ENCODE measurements at regions of chr20 and their contacts with region 1.

Region 1: DNA sequence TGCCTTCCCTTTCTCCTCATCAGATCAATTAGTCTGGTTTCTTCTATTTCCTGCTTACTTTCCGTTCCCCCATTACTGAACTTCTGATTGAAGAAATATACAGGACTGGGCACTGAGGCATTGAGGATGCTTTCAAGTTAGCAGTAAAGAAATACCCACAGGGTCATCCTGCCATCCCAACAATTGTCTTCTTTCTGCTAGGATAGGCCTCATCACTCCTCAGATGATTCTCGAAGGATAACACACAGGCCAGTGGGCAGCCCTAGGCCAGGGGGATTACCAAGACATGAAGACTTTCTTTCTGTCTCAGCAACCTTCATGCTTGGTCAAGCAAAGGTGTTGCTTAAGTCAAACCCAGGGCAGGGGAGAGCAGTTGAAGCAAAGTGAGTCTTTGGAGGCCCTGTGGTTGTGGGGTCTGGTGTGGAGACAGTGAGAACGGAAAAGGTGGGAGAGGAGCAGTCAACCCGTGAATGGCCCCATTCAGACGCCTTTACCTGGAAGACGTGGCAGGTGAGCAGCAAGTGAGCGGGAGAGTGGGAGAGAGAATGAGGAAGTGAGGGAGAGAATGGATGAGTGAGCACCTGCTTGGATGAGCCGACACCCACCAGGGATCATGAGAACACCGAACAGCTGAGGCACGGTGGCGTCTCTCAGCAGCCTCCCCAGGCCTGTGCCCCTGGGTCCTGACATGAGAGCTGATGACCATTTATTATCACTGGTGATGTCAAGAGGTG is 462.9 kb downstream of the PREX1 start:
- DNase-seq: no peak
- H3K4me3 ChIP-seq: no peak overlapping the region
- H3K27ac ChIP-seq: no peak overlapping the region
- H3K4me1 ChIP-seq: peaks cover 0 to 24% (median 23%) of the 10 kb centered on the region in 4 donors
- H3K27me3 ChIP-seq: no peaks in the 10 kb centered on the region
- CTCF ChIP-seq: no peak
- EP300 ChIP-seq: no peak
- POLR2A ChIP-seq: no peak

Region 2: GRCh38 chr20:48342822-48343484 is 21.9 kb before region 1 on chr20:
- intact Hi-C with region 1: loop called (anchors 2 kb)
- DNase-seq: no peak
- H3K4me3 ChIP-seq: no peak overlapping the region
- H3K27ac ChIP-seq: no peak overlapping the region
- H3K4me1 ChIP-seq: peaks cover 0 to 28% (median 17%) of the 10 kb centered on the region in 4 donors
- H3K27me3 ChIP-seq: no peaks in the 10 kb centered on the region
- CTCF ChIP-seq: no peak
- EP300 ChIP-seq: no peak
- POLR2A ChIP-seq: no peak

Region 3: GRCh38 chr20:48431653-48432516 is 67.0 kb after region 1 on chr20:
- intact Hi-C with region 1: no loop called
- DNase-seq: no peak
- H3K4me3 ChIP-seq: no peak overlapping the region
- H3K27ac ChIP-seq: no peak overlapping the region
- H3K4me1 ChIP-seq: peaks cover 0 to 10% (median 7%) of the 10 kb centered on the region in 4 donors
- H3K27me3 ChIP-seq: no peaks in the 10 kb centered on the region
- CTCF ChIP-seq: no peak
- EP300 ChIP-seq: no peak
- POLR2A ChIP-seq: no peak

Measured in sigmoid colon (tissue), 7 donors.